ENCODE measurements at regions of chr4 and their contacts with region 1.

Region 1: DNA sequence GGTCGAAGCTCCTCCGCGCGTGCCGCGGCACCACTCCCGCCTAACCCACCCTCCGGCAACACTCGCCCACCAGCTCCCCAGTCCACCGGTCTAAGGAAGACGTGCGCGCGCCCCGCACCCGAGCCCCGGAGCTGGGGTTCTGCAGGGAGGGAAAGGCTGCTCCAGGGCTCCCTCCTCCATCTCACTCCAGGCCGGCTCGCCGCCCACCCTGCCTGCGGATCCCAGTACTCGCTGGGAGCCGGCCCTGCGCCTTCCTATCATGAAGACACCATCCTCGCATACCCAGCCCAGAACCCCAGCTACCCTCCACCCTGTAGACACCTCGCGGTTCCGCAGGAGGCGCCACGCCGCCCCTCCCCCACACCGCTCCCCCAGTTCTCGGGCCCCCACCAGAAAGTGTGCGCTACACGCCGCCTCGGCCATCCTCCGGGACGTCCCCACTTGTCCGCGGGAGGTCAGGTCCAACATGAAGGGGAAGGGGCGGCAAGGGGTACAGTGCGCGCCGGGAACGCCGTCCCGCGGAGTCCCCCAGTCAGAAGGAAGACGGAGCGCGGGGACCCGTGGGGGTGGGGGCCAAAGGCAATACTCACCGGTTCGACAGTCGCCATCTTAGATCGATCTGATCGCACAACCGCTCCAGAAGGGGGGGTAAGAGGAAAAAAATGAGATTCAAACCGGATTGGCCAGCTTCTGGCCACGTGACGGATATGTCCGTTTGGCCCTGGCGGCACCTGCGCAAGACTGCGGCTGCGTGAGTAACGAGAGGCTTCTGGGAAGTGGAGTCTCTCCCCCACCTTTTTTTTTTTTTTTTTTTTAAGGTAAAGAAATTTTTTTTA is at the start of gene EIF4E:
- DNase-seq: peak; percentile 97
- H3K4me3 Mint-ChIP-seq: peak within 1 kb of the TSS; percentile 92
- H3K27ac Mint-ChIP-seq: peak within 1 kb of the TSS; percentile 95
- H3K4me1 Mint-ChIP-seq: peaks cover 33% of the 10 kb centered on the region
- H3K27me3 Mint-ChIP-seq: no peaks in the 10 kb centered on the region
- total RNA-seq, gene EIF4E: 142 and 153 TPM in 2 replicates

Region 2: GRCh38 chr4:98260579-98261290 is 668.0 kb before region 1 on chr4:
- intact Hi-C with region 1: loop called (anchors 1 kb)
- DNase-seq: peak; percentile 89
- H3K4me3 Mint-ChIP-seq: peak overlapping the region; percentile 95
- H3K27ac Mint-ChIP-seq: peak overlapping the region; percentile 98
- H3K4me1 Mint-ChIP-seq: peaks cover 44% of the 10 kb centered on the region
- H3K27me3 Mint-ChIP-seq: no peaks in the 10 kb centered on the region

Region 3: GRCh38 chr4:98467627-98468072 is 461.1 kb before region 1 on chr4:
- intact Hi-C with region 1: loop called (anchors 5 kb)
- DNase-seq: peak; percentile 66
- H3K4me3 Mint-ChIP-seq: peak overlapping the region; percentile 62
- H3K27ac Mint-ChIP-seq: no peak overlapping the region
- H3K4me1 Mint-ChIP-seq: peaks cover 39% of the 10 kb centered on the region
- H3K27me3 Mint-ChIP-seq: no peaks in the 10 kb centered on the region

Region 4: DNA sequence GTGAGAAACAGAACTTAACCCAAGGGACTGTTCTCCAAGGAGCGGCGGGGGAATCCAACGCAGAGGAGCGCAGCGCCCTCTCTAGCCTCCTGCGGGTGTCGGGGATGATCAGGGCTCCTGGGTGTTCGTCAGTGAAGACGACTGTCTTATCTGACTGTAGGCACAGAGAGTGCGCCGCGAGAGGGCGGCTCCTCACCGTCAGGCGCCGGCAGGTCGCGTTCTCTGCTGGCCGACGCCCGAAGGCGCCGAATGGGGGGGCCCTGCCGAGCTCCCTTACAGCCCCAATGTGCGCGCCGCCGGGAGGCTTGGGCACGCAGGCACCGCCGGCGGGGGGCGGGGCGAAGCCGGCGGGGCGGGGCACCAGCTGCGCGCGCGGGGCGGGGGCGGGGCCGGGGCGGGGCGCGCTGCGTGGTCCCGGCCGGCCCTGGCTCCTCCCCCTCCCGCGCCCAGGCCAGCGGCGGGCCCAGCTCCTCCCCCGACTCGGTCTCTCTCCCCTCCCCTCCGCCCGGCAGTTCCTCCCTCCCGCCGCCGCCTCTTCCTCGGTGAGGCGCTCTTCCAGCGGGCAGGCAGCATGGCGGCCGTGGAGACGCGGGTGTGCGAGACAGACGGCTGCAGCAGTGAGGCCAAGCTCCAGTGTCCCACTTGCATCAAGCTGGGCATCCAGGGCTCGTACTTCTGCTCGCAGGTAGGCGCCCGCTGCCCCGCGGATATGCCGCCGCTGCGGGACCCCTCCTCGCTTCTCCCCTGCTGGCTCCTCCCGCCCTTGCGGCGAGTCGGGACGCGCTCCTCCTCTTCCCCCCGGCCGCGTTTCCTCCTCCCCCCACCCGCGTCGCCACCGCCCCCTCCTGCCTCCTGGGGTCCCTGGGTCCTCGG is 66.7 kb after region 1 on chr4 and contains the start of gene METAP1:
- intact Hi-C with region 1: loop called (anchors 1 kb)
- DNase-seq: peak; percentile 94
- H3K4me3 Mint-ChIP-seq: peak within 1 kb of the TSS; percentile 91
- H3K27ac Mint-ChIP-seq: peak within 1 kb of the TSS; percentile 99
- H3K4me1 Mint-ChIP-seq: peaks cover 26% of the 10 kb centered on the region
- H3K27me3 Mint-ChIP-seq: no peaks in the 10 kb centered on the region
- total RNA-seq, gene METAP1: 58.2 and 58.7 TPM in 2 replicates

Region 5: DNA sequence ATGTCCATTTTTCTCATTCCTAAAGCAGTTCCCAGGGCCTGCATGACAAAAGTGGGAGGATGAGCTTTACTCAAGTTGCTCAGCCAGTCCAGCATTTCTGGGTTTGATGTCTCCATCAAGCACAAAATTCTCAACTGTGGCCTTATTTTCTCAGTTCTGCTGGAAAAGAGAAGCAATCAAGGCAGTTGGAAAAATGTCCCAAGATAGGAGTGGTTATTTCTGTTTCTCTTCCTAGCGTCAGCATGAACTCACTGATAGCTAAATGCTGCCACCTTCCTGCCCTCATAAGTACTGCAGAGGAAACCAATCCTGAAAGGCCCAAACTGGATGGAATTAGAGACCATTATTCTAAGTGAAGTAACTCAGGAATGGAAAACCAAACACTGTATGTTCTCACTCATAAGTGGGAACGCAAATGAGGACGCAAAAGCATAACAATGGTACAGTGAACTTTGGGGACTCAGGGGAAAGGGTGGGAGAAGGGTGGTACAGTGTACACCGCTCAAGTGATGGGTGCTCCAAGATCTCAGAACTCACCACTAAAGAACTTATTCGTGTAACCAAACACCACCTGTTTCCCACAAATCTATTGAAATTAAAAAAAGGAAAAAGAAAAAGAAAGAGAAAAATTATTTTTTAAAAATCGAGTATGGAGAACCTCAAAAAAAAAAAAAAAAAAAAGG is 476.9 kb after region 1 on chr4:
- intact Hi-C with region 1: loop called (anchors 10 kb)
- DNase-seq: peak; percentile 13
- H3K4me3 Mint-ChIP-seq: no peak overlapping the region
- H3K27ac Mint-ChIP-seq: no peak overlapping the region
- H3K4me1 Mint-ChIP-seq: peaks cover 21% of the 10 kb centered on the region
- H3K27me3 Mint-ChIP-seq: peaks cover 10% of the 10 kb centered on the region

Measured in activated T-helper 2 cell treated with anti-CD3 and anti-CD28 coated beads, Interferon-gamma antibody, Interleukin-2, Interleukin-4, amounts not matched to agents 10 μg/mL and 5 μg/mL and 100 μg/mL, durations not matched to agents 14 hours and 24 hours and 36 hours (primary cell).